ENCODE measurements at regions of chr5 and their contacts with region 1.

Region 1: DNA sequence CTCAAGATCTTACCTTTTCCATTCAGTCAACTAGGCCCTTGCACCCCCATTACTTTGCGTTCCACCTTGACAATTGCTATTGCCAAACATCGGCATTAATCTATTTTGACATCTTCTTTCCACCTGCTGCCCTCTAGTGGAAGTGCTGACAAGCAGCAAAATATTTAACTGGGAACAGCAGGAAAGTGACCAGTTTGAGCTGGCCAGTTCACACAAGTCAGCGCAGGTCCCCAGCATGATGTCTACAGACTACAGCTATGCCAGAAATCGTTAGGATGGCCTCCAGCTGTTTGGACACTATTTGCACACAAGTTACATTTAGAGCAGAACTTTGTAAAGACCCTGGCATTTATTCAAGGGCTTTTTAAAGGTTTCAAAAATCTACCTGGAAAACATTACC is 160.1 kb downstream of the GHR start:
- DNase-seq: peak; percentile 45
- H3K4me3 ChIP-seq: no peak overlapping the region
- H3K27ac ChIP-seq: no peak overlapping the region
- H3K4me1 ChIP-seq: no peaks in the 10 kb centered on the region
- H3K27me3 ChIP-seq: peaks cover 34% of the 10 kb centered on the region
- CTCF ChIP-seq: peak; percentile 89

Region 2: GRCh38 chr5:42396111-42396510 is 187.2 kb before region 1 on chr5:
- CTCF ChIA-PET with region 1: no interaction called
- POLR2A ChIA-PET with region 1: no interaction called
- intact Hi-C with region 1: no loop called
- DNase-seq: no peak
- H3K4me3 ChIP-seq: no peak overlapping the region
- H3K27ac ChIP-seq: no peak overlapping the region
- H3K4me1 ChIP-seq: no peaks in the 10 kb centered on the region
- H3K27me3 ChIP-seq: no peaks in the 10 kb centered on the region
- CTCF ChIP-seq: no peak

Region 3: GRCh38 chr5:42423285-42424165 is 159.8 kb before region 1 on chr5 and contains the start of gene GHR:
- CTCF ChIA-PET with region 1: interaction called, 6 read pairs
- POLR2A ChIA-PET with region 1: no interaction called
- intact Hi-C with region 1: loop called (anchors 5 kb)
- DNase-seq: peak; percentile 89
- H3K4me3 ChIP-seq: peak within 1 kb of the TSS; percentile 47
- H3K27ac ChIP-seq: no peak within 1 kb of the TSS
- H3K4me1 ChIP-seq: peaks cover 5% of the 10 kb centered on the region
- H3K27me3 ChIP-seq: peaks cover 24% of the 10 kb centered on the region
- CTCF ChIP-seq: peak; percentile 77
- total RNA-seq, gene GHR: not detected in 2 replicates

Measured in A673 (cell line).